ENCODE measurements at regions of chr5 and their contacts with region 1.

Region 1: DNA sequence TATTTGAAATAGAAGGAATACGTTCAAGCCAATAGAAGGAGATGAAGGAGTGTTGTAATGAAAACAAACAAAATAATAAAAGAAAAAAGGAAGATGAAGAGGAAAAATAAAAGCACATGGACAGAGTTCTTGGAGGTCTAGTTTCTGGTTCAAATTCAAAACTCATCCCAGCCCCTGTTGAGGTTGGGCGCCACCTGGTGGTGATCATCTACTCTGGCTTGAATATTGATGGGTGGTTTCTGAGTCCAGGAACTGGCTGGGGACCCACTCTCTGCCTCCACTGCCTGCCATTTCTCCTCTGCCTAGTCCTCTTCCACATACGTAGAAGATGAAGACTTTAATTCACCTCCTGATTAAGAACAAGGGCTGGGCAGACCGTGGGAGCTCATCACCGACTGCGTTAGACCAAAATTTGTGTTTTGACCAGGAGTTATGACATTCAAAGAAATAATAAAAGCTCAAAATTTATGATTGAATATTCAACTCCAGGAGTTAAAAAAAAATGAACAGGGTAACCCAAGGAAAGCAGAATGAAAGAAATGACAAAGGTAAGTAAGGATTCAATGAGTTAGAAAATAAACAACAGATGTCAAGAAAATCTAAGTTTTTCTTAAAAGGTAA is 99.0 kb upstream of the SLC1A3 start:
- DNase-seq: peak; percentile 81 to 86
- H3K4me3 ChIP-seq: no peak overlapping the region
- H3K27ac ChIP-seq: no peak overlapping the region
- H3K4me1 ChIP-seq: no peaks in the 10 kb centered on the region
- H3K27me3 ChIP-seq: peaks cover 0 to 2% of the 10 kb centered on the region in 2 donors
- CTCF ChIP-seq: peak; percentile 76 to 85

Region 2: GRCh38 chr5:36279054-36279698 is 228.3 kb before region 1 on chr5:
- intact Hi-C with region 1: no loop called
- DNase-seq: no peak
- H3K4me3 ChIP-seq: peak overlapping the region; percentile 7 to 20
- H3K27ac ChIP-seq: peak overlapping the region; percentile 75 to 79
- H3K4me1 ChIP-seq: peaks cover 0 to 98% (median 58%) of the 10 kb centered on the region in 4 donors
- H3K27me3 ChIP-seq: no peaks in the 10 kb centered on the region
- CTCF ChIP-seq: no peak

Region 3: GRCh38 chr5:36695677-36696673 is 188.5 kb after region 1 on chr5:
- intact Hi-C with region 1: loop called (anchors 5 kb)
- DNase-seq: peak in 1 of 2 donors; percentile 40
- H3K4me3 ChIP-seq: no peak overlapping the region
- H3K27ac ChIP-seq: no peak overlapping the region
- H3K4me1 ChIP-seq: peaks cover 0 to 22% (median 13%) of the 10 kb centered on the region in 4 donors
- H3K27me3 ChIP-seq: peaks cover 0 to 4% of the 10 kb centered on the region in 2 donors
- CTCF ChIP-seq: peak; percentile 45 to 52

Measured in tibial artery (tissue), 4 donors.